Aorta (tissue), 5 donors: ENCODE measurements at regions of chr20 and their contacts with region 1.

Region 1: GRCh38 chr20:39892983-39893685 is 795.9 kb downstream of the MAFB start:
- DNase-seq: no peak
- ATAC-seq: no peak
- H3K4me3 ChIP-seq: no peak overlapping the region
- H3K27ac ChIP-seq: no peak overlapping the region
- H3K4me1 ChIP-seq: no peaks in the 10 kb centered on the region
- H3K27me3 ChIP-seq: no peaks in the 10 kb centered on the region

Region 2: GRCh38 chr20:39849664-39850063 is 43.5 kb before region 1 on chr20:
- intact Hi-C with region 1: no loop called
- DNase-seq: peak; percentile 90 to 92
- ATAC-seq: peak; percentile 77
- H3K4me3 ChIP-seq: no peak overlapping the region
- H3K27ac ChIP-seq: no peak overlapping the region
- H3K4me1 ChIP-seq: no peaks in the 10 kb centered on the region
- H3K27me3 ChIP-seq: peaks cover 0 to 3% of the 10 kb centered on the region in 2 donors

Region 3: GRCh38 chr20:39935901-39936300 is 42.8 kb after region 1 on chr20:
- intact Hi-C with region 1: loop called in 1 of 2 experiments (anchors 5 kb)
- DNase-seq: no peak
- ATAC-seq: no peak
- H3K4me3 ChIP-seq: no peak overlapping the region
- H3K27ac ChIP-seq: no peak overlapping the region
- H3K4me1 ChIP-seq: no peaks in the 10 kb centered on the region
- H3K27me3 ChIP-seq: peaks cover 0 to 2% of the 10 kb centered on the region in 2 donors